Caco-2 (cell line): ENCODE measurements at regions of chr7 and their contacts with region 1.

Region 1: DNA sequence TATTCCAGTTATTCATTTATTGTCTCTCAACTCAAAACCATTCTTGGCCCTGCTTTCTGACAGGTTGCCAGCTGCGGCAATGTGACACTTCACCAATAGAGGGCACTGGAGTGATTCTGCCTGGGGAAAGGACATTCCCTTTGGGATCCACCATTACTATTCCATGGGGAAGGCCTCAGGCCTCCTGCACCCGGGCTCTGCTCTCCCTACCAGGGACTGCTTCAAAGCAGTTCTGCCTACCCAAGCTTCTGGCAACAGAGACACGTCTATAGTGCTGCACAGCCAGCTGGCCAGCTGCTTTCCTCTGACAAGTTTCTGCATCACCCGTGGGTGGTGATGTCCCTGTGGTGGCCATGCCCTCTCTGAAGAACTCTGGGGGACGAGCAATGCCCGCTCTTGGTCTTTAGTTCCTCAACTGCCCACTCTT is 163.8 kb downstream of the ELMO1 start:
- DNase-seq: peak; percentile 52 to 56
- H3K4me3 ChIP-seq: no peak overlapping the region
- H3K4me3 Mint-ChIP-seq: no peak overlapping the region
- H3K27ac Mint-ChIP-seq: no peak overlapping the region
- H3K4me1 ChIP-seq: no peaks in the 10 kb centered on the region
- H3K4me1 Mint-ChIP-seq: no peaks in the 10 kb centered on the region
- H3K27me3 ChIP-seq: no peaks in the 10 kb centered on the region
- H3K27me3 Mint-ChIP-seq: peaks cover 10% of the 10 kb centered on the region
- CTCF ChIP-seq: peak; percentile 69

Region 2: DNA sequence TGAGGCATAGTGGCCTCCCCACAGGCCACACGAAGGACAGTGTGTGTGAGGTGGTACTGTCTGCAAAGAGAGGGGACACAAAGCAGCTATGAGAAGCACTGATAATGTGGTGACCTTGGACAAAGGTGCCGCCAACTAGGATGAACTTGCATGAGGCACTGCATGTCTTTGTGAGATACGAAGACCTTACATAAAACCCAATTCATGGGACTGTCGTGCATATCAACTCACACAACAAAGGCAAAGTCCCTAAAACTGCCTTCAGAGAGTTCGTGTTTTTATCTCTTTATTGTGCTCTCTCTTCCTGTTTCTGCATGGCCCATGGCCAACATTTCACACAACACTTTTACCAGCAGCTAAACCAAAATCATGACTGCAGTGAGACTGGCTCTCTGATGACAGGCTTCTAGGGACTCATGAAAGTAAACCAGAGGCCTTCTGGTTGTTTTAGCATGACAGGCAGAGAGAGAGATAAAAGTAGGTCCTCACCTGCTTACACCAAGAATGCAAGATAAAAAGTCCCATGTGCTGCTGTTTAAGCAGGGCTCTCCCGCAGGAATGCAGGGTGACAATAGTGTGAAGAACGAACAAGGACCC is 184.0 kb before region 1 on chr7:
- CTCF ChIA-PET with region 1: no interaction called
- POLR2A ChIA-PET with region 1: no interaction called
- intact Hi-C with region 1: no loop called
- DNase-seq: peak; percentile 53 to 66
- H3K4me3 ChIP-seq: no peak overlapping the region
- H3K4me3 Mint-ChIP-seq: peak overlapping the region; percentile 20
- H3K27ac Mint-ChIP-seq: peak overlapping the region; percentile 63
- H3K4me1 ChIP-seq: peaks cover 32% of the 10 kb centered on the region
- H3K4me1 Mint-ChIP-seq: peaks cover 17% of the 10 kb centered on the region
- H3K27me3 ChIP-seq: no peaks in the 10 kb centered on the region
- H3K27me3 Mint-ChIP-seq: no peaks in the 10 kb centered on the region
- CTCF ChIP-seq: no peak

Region 3: DNA sequence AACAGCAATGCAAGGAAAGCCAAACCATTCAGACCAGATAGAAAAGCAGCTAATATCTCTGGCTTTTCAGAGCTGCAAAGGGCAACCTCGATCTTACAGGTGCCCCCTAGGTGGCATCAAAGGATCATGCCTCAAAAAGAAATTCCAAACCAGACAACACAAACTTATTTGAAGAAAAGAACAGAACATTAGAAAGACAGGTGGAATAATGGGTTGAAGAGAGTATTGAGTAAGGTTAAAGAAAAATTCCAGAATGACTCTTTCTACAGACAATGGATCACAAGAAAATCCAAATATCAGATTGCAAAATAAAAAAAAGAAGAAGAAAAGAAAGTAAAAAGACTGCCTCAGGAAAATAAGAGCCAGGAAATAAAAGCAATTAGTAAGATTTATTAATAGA is 49.9 kb before region 1 on chr7:
- CTCF ChIA-PET with region 1: no interaction called
- POLR2A ChIA-PET with region 1: no interaction called
- intact Hi-C with region 1: no loop called
- DNase-seq: peak in 1 of 2 experiments; percentile 22
- H3K4me3 ChIP-seq: no peak overlapping the region
- H3K4me3 Mint-ChIP-seq: no peak overlapping the region
- H3K27ac Mint-ChIP-seq: no peak overlapping the region
- H3K4me1 ChIP-seq: no peaks in the 10 kb centered on the region
- H3K4me1 Mint-ChIP-seq: no peaks in the 10 kb centered on the region
- H3K27me3 ChIP-seq: no peaks in the 10 kb centered on the region
- H3K27me3 Mint-ChIP-seq: peaks cover 18% of the 10 kb centered on the region
- CTCF ChIP-seq: peak; percentile 30 to 58

Region 4: GRCh38 chr7:37352974-37353948 is 68.4 kb after region 1 on chr7:
- CTCF ChIA-PET with region 1: interaction called, 4 read pairs
- POLR2A ChIA-PET with region 1: no interaction called
- intact Hi-C with region 1: loop called (anchors 1 kb)
- DNase-seq: peak; percentile 42 to 45
- H3K4me3 ChIP-seq: no peak overlapping the region
- H3K4me3 Mint-ChIP-seq: no peak overlapping the region
- H3K27ac Mint-ChIP-seq: no peak overlapping the region
- H3K4me1 ChIP-seq: no peaks in the 10 kb centered on the region
- H3K4me1 Mint-ChIP-seq: no peaks in the 10 kb centered on the region
- H3K27me3 ChIP-seq: no peaks in the 10 kb centered on the region
- H3K27me3 Mint-ChIP-seq: peaks cover 4% of the 10 kb centered on the region
- CTCF ChIP-seq: peak; percentile 51 to 55

Region 5: GRCh38 chr7:37495574-37496184 is 210.9 kb after region 1 on chr7:
- CTCF ChIA-PET with region 1: interaction called, 3 read pairs
- POLR2A ChIA-PET with region 1: no interaction called
- intact Hi-C with region 1: loop called (anchors 1 kb)
- DNase-seq: peak in 1 of 2 experiments; percentile 13
- H3K4me3 ChIP-seq: no peak overlapping the region
- H3K4me3 Mint-ChIP-seq: no peak overlapping the region
- H3K27ac Mint-ChIP-seq: no peak overlapping the region
- H3K4me1 ChIP-seq: no peaks in the 10 kb centered on the region
- H3K4me1 Mint-ChIP-seq: no peaks in the 10 kb centered on the region
- H3K27me3 ChIP-seq: no peaks in the 10 kb centered on the region
- H3K27me3 Mint-ChIP-seq: peaks cover 3% of the 10 kb centered on the region
- CTCF ChIP-seq: peak in 1 of 2 experiments; percentile 69

Region 6: GRCh38 chr7:37674531-37674930 is 389.7 kb after region 1 on chr7:
- CTCF ChIA-PET with region 1: no interaction called
- POLR2A ChIA-PET with region 1: no interaction called
- intact Hi-C with region 1: no loop called
- DNase-seq: no peak
- H3K4me3 ChIP-seq: no peak overlapping the region
- H3K4me3 Mint-ChIP-seq: no peak overlapping the region
- H3K27ac Mint-ChIP-seq: no peak overlapping the region
- H3K4me1 ChIP-seq: no peaks in the 10 kb centered on the region
- H3K4me1 Mint-ChIP-seq: no peaks in the 10 kb centered on the region
- H3K27me3 ChIP-seq: no peaks in the 10 kb centered on the region
- H3K27me3 Mint-ChIP-seq: peaks cover 6% of the 10 kb centered on the region
- CTCF ChIP-seq: no peak